GM10248 (cell line): ENCODE measurements at regions of chr19 and their contacts with region 1.

Region 1: GRCh38 chr19:49301165-49301865 is 23.7 kb downstream of the SLC6A16 start:
- DNase-seq: peak; percentile 92
- CTCF ChIP-seq: peak; percentile 80

Region 2: GRCh38 chr19:49272184-49272583 is 29.1 kb before region 1 on chr19:
- CTCF ChIA-PET with region 1: interaction called, 12 read pairs
- POLR2A ChIA-PET with region 1: no interaction called
- DNase-seq: no peak
- CTCF ChIP-seq: no peak

Region 3: GRCh38 chr19:49290517-49290916 is 10.8 kb before region 1 on chr19:
- CTCF ChIA-PET with region 1: interaction called, 25 read pairs
- POLR2A ChIA-PET with region 1: no interaction called
- DNase-seq: no peak
- CTCF ChIP-seq: no peak

Region 4: GRCh38 chr19:49324801-49325576 is 23.7 kb after region 1 on chr19 and contains the start of gene SLC6A16:
- CTCF ChIA-PET with region 1: interaction called, 17 read pairs
- POLR2A ChIA-PET with region 1: no interaction called
- DNase-seq: peak; percentile 10
- CTCF ChIP-seq: no peak